ENCODE measurements at regions of chr1 and their contacts with region 1.

Region 1: GRCh38 chr1:53061859-53062707 is at the start of gene PODN:
- DNase-seq: peak; percentile 89
- total RNA-seq, gene PODN: 155 to 285 TPM

Region 2: GRCh38 chr1:53110370-53111072 is 48.4 kb after region 1 on chr1:
- intact Hi-C with region 1: loop called in 1 of 2 experiments (anchors 1 kb)
- DNase-seq: no peak

Region 3: GRCh38 chr1:53182111-53182593 is 120.1 kb after region 1 on chr1:
- intact Hi-C with region 1: loop called in 1 of 2 experiments (anchors 10 kb)
- DNase-seq: peak; percentile 94

Measured in posterior vena cava (tissue), 2 donors.